ENCODE measurements at regions of chr13 and their contacts with region 1.

Region 1: GRCh38 chr13:114124921-114125320 is 7.5 kb downstream of the RASA3 start:
- DNase-seq: peak in 9 of 10 donors; percentile 60 to 91 (median 77)
- ATAC-seq: peak; percentile 58 to 80
- H3K4me3 Mint-ChIP-seq: peak overlapping the region; percentile 60 to 89 (median 84)
- H3K27ac Mint-ChIP-seq: peak overlapping the region; percentile 94 to 99 (median 97)
- H3K4me1 Mint-ChIP-seq: peaks cover 58 to 90% (median 89%) of the 10 kb centered on the region in 4 donors
- H3K27me3 Mint-ChIP-seq: no peaks in the 10 kb centered on the region

Region 2: GRCh38 chr13:114226699-114227323 is 101.9 kb after region 1 on chr13:
- POLR2A ChIA-PET with region 1: interaction called, 38 read pairs
- DNase-seq: peak; percentile 69 to 89 (median 80)
- ATAC-seq: peak; percentile 81 to 87
- H3K4me3 Mint-ChIP-seq: peak overlapping the region; percentile 7 to 76 (median 58)
- H3K27ac Mint-ChIP-seq: peak overlapping the region; percentile 78 to 95 (median 88)
- H3K4me1 Mint-ChIP-seq: peaks cover 20 to 49% (median 49%) of the 10 kb centered on the region in 4 donors
- H3K27me3 Mint-ChIP-seq: peaks cover 0 to 7% (median 4%) of the 10 kb centered on the region in 5 donors